BJ (cell line): ENCODE measurements at regions of chr14 and their contacts with region 1.

Region 1: GRCh38 chr14:64823305-64823861 is 56.3 kb downstream of the SPTB start:
- DNase-seq: no peak
- H3K4me3 ChIP-seq: no peak overlapping the region
- H3K27me3 ChIP-seq: peaks cover 1% of the 10 kb centered on the region; the same call in 1 of the 2 replicates
- CTCF ChIP-seq: peak; percentile 88

Region 2: GRCh38 chr14:64800000-64800399 is 23.4 kb before region 1 on chr14:
- CTCF ChIA-PET with region 1: interaction called, 24 read pairs
- POLR2A ChIA-PET with region 1: no interaction called
- DNase-seq: no peak
- H3K4me3 ChIP-seq: no peak overlapping the region
- H3K27me3 ChIP-seq: no peaks in the 10 kb centered on the region
- CTCF ChIP-seq: peak; percentile 69

Region 3: DNA sequence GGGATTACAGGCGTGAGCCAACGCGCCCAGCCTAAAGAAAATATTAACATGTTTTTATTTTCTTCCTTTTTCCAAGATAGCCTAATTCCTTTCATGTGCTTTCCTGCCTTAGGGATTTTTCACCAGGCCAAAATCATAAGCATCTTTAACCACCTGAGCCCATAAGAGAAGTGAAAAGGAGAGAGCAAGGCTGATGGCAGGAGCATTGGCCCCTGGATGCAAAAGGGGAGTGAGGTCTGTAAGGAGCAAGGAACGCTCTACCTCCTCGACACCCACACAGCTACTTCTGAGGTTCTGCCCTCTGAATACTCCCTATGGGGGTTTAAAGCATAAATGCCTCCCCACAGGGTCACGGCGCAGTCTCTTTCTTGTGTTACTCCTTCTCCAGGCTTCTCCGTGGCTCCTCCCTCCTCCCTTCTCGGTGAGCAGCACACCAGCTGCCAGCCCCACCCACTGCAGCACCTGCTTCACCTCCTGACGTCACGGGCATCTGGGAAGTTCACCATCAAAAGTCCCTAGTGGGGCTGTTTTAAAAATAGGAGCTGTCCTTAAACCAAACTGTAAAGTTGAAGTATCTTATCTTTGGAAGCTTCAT is 11.1 kb before region 1 on chr14:
- CTCF ChIA-PET with region 1: interaction called, 21 read pairs
- POLR2A ChIA-PET with region 1: no interaction called
- DNase-seq: no peak
- H3K4me3 ChIP-seq: no peak overlapping the region
- H3K27me3 ChIP-seq: no peaks in the 10 kb centered on the region
- CTCF ChIP-seq: no peak

Region 4: DNA sequence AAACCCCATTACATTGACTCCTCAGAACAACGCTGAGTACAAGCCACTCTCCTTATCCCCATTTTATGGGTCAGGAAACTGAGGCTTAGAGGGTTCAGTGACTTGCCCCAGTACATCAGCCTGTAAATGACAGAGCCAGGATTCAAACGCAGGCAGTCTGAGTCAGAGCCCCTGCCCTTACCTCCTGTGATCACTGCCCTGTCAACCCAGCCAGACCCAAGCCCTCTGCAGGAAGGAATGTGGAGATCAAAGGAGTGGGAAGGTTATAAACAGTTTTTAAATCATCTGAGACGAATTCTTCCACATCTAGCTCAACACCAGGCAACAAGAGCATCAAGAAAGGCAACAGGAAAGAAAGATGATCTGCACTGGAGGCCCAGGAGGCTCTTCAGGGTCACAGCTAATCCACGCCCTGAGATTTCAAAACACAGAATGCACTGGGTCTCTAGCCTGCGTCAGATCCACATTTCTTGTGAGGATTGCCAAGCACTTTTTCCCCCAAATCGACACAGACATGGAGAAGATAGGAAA is 17.8 kb after region 1 on chr14:
- CTCF ChIA-PET with region 1: interaction called, 13 read pairs
- POLR2A ChIA-PET with region 1: no interaction called
- DNase-seq: peak; percentile 25
- H3K4me3 ChIP-seq: no peak overlapping the region
- H3K27me3 ChIP-seq: peaks cover 11% of the 10 kb centered on the region
- CTCF ChIP-seq: peak; percentile 60

Region 5: DNA sequence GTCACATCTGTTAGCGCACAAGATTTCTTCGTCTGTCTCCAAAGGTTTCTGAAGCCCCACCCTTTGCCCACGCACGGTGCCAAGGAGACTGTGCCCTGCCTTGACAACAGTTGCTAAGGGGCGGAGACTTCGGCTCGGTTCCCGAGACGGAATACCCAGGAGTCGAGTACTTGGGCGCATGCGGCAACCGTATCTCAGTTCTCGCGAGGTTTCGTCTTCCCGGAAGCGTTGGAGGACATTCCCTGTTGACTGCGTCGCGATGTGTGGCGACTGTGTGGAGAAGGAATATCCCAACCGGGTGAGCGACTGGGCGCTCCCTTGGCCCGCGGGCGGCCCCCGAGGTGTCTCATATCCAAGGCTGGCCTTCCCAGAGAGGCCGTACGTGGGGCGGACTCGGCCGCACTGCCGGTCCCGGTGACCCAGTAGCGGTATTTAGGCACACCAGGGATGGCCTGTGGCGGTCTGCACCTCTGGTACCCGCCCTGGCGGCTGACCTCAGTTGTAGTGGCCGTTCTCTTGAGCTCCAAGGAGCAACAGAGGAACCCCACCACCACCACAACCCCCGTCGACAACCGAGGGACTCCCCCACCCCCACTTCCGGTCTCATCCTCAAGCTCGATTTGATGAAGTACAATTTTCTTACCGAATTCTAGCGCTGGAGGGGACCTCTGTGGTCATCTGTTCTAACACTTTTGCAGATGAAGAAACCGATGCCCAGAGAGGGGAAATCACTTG is 91.0 kb after region 1 on chr14 and contains the start of gene CHURC1:
- CTCF ChIA-PET with region 1: interaction called, 18 read pairs
- POLR2A ChIA-PET with region 1: no interaction called
- DNase-seq: peak; percentile 87
- H3K4me3 ChIP-seq: peak within 1 kb of the TSS; percentile 91
- H3K27me3 ChIP-seq: peaks cover 4% of the 10 kb centered on the region
- CTCF ChIP-seq: no peak
- polyA plus RNA-seq, gene CHURC1: 30.6 and 84.4 TPM in 2 replicates